ENCODE measurements at regions of chr12 and their contacts with region 1.

Region 1: GRCh38 chr12:98698603-98699463 is 53.7 kb downstream of the APAF1 start:
- DNase-seq: peak; percentile 7 to 26
- ATAC-seq: peak; percentile 68 to 72
- H3K4me3 ChIP-seq: no peak overlapping the region
- H3K27ac ChIP-seq: no peak overlapping the region
- H3K4me1 ChIP-seq: peaks cover 5 to 6% of the 10 kb centered on the region in 2 donors
- H3K27me3 ChIP-seq: no peaks in the 10 kb centered on the region
- CTCF ChIP-seq: peak in 1 of 5 experiments; percentile 44
- POLR2A ChIP-seq: no peak

Region 2: DNA sequence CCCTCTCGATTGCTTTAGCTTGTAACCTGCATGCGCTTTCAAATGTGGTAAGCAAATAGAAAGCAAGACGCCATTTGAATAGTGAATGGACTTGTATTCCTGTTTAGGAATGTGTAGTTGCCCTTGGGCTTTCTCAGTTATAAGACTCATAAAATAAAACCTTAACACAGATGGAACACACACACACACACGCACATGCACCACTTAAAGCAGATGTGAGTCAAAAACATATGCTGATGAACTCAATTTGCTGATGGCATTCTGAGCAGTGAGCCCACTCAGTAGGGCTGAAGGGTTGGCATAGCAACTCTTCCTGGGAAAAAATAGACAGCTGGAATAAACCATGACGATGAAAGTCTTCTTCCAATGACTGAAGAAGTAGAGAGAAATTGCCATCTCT is 306.8 kb after region 1 on chr12:
- in situ Hi-C with region 1: loop called in 1 of 4 experiments (anchors 25 kb)
- intact Hi-C with region 1: no loop called
- DNase-seq: no peak
- ATAC-seq: no peak
- H3K4me3 ChIP-seq: no peak overlapping the region
- H3K27ac ChIP-seq: no peak overlapping the region
- H3K4me1 ChIP-seq: no peaks in the 10 kb centered on the region
- H3K27me3 ChIP-seq: no peaks in the 10 kb centered on the region
- CTCF ChIP-seq: no peak
- POLR2A ChIP-seq: no peak